Caco-2 (cell line): ENCODE measurements at regions of chr4 and their contacts with region 1.

Region 1: GRCh38 chr4:125314676-125315575 is at the start of gene FAT4:
- DNase-seq: peak; percentile 84 to 86
- H3K4me3 ChIP-seq: peak within 1 kb of the TSS; percentile 47
- H3K4me3 Mint-ChIP-seq: peak within 1 kb of the TSS; percentile 79
- H3K27ac Mint-ChIP-seq: no peak within 1 kb of the TSS
- H3K4me1 ChIP-seq: 0 out of 2 replicates have a peak, but pooled peaks cover 7% of the 10 kb centered on the region
- H3K4me1 Mint-ChIP-seq: no peaks in the 10 kb centered on the region
- H3K27me3 ChIP-seq: no peaks in the 10 kb centered on the region
- H3K27me3 Mint-ChIP-seq: no peaks in the 10 kb centered on the region
- CTCF ChIP-seq: no peak
- total RNA-seq, gene FAT4: 0.05 TPM in 1 of 2 replicates, not detected in the other

Region 2: DNA sequence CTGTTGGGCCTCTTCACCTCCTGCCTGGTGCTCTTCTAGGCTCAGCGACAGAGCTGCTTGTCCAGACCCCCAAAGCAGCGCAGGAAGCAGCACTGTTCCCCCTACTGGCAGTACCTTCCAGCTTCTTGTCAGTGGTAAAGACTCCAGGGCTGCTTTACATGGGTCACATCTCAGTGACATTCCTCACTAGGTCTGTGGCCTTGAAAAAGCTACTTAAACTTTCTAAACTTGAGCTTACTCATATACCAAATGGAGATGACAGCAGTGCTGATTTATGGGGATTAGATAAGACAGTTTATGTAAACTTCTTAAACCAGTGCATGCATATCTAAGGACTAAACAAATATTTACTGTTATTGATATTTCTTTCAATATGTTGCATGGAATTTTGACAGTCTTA is 117.2 kb after region 1 on chr4:
- CTCF ChIA-PET with region 1: no interaction called
- POLR2A ChIA-PET with region 1: no interaction called
- intact Hi-C with region 1: loop called (anchors 5 kb)
- DNase-seq: peak in 1 of 2 experiments; percentile 3
- H3K4me3 ChIP-seq: no peak overlapping the region
- H3K4me3 Mint-ChIP-seq: no peak overlapping the region
- H3K27ac Mint-ChIP-seq: no peak overlapping the region
- H3K4me1 ChIP-seq: no peaks in the 10 kb centered on the region
- H3K4me1 Mint-ChIP-seq: no peaks in the 10 kb centered on the region
- H3K27me3 ChIP-seq: no peaks in the 10 kb centered on the region
- H3K27me3 Mint-ChIP-seq: no peaks in the 10 kb centered on the region
- CTCF ChIP-seq: peak in 1 of 2 experiments; percentile 9

Region 3: GRCh38 chr4:125590158-125590557 is 275.2 kb after region 1 on chr4:
- CTCF ChIA-PET with region 1: no interaction called
- POLR2A ChIA-PET with region 1: no interaction called
- intact Hi-C with region 1: loop called (anchors 10 kb)
- DNase-seq: peak; percentile 11 to 49
- H3K4me3 ChIP-seq: no peak overlapping the region
- H3K4me3 Mint-ChIP-seq: no peak overlapping the region
- H3K27ac Mint-ChIP-seq: no peak overlapping the region
- H3K4me1 ChIP-seq: 0 out of 2 replicates have a peak, but pooled peaks cover 7% of the 10 kb centered on the region
- H3K4me1 Mint-ChIP-seq: no peaks in the 10 kb centered on the region
- H3K27me3 ChIP-seq: no peaks in the 10 kb centered on the region
- H3K27me3 Mint-ChIP-seq: no peaks in the 10 kb centered on the region
- CTCF ChIP-seq: no peak

Region 4: DNA sequence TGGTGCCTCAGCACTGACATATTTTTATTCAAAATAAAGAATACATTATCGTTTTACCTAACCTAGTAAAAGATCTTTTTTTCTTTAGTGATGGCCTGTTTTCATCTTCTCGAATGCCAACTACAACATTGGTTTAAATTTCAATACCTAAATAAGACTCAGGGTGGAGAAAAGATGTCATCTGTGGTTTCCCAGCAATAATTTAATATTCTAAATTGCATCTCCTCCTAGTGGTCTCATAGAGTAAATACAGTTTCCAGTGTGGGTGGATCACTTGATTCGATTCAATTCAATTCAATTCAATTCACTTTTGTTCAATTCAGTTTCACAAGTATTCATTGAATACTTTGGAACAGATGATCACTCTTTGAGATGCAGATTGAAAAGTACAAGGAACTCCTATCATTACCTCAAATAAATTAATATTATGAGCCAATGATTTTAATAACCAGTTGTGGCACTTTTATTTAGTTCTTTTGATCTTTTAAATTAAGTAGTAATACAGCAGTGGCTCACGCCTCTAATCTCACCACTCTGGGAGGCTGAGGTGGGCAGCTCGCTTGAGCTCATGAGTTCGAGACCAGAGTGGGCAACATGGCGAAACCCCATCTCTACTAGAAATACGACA is 427.0 kb after region 1 on chr4:
- CTCF ChIA-PET with region 1: no interaction called
- POLR2A ChIA-PET with region 1: no interaction called
- intact Hi-C with region 1: loop called (anchors 2 kb)
- DNase-seq: no peak
- H3K4me3 ChIP-seq: no peak overlapping the region
- H3K4me3 Mint-ChIP-seq: no peak overlapping the region
- H3K27ac Mint-ChIP-seq: no peak overlapping the region
- H3K4me1 ChIP-seq: no peaks in the 10 kb centered on the region
- H3K4me1 Mint-ChIP-seq: no peaks in the 10 kb centered on the region
- H3K27me3 ChIP-seq: no peaks in the 10 kb centered on the region
- H3K27me3 Mint-ChIP-seq: no peaks in the 10 kb centered on the region
- CTCF ChIP-seq: peak; percentile 10 to 41

Region 5: DNA sequence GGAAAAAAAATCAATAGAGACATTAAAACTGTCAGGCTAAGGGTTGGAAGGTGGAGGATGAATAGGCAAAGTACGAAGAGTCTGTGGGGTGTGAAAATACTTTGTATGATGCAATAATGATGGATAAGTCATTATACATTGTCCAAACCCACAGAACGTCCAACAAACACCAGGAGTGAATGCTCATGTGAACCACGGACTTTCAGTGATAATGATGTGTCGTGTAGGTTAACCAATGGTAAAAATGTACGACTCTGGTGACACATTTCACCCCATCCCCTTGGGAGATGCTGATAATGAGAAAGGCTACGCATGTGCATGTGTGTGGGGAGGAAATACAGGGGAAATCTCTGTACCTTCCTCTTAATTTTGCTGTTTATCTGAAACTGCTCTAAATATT is 665.0 kb after region 1 on chr4:
- CTCF ChIA-PET with region 1: no interaction called
- POLR2A ChIA-PET with region 1: no interaction called
- intact Hi-C with region 1: loop called (anchors 1 kb)
- DNase-seq: no peak
- H3K4me3 ChIP-seq: no peak overlapping the region
- H3K4me3 Mint-ChIP-seq: no peak overlapping the region
- H3K27ac Mint-ChIP-seq: no peak overlapping the region
- H3K4me1 ChIP-seq: no peaks in the 10 kb centered on the region
- H3K4me1 Mint-ChIP-seq: no peaks in the 10 kb centered on the region
- H3K27me3 ChIP-seq: no peaks in the 10 kb centered on the region
- H3K27me3 Mint-ChIP-seq: no peaks in the 10 kb centered on the region
- CTCF ChIP-seq: no peak

Region 6: GRCh38 chr4:126405369-126405982 is 1090.5 kb after region 1 on chr4:
- CTCF ChIA-PET with region 1: no interaction called
- POLR2A ChIA-PET with region 1: no interaction called
- intact Hi-C with region 1: loop called (anchors 1 kb)
- DNase-seq: peak in 1 of 2 experiments; percentile 7
- H3K4me3 ChIP-seq: no peak overlapping the region
- H3K4me3 Mint-ChIP-seq: no peak overlapping the region
- H3K27ac Mint-ChIP-seq: no peak overlapping the region
- H3K4me1 ChIP-seq: no peaks in the 10 kb centered on the region
- H3K4me1 Mint-ChIP-seq: no peaks in the 10 kb centered on the region
- H3K27me3 ChIP-seq: no peaks in the 10 kb centered on the region
- H3K27me3 Mint-ChIP-seq: no peaks in the 10 kb centered on the region
- CTCF ChIP-seq: peak; percentile 30 to 41

Region 7: DNA sequence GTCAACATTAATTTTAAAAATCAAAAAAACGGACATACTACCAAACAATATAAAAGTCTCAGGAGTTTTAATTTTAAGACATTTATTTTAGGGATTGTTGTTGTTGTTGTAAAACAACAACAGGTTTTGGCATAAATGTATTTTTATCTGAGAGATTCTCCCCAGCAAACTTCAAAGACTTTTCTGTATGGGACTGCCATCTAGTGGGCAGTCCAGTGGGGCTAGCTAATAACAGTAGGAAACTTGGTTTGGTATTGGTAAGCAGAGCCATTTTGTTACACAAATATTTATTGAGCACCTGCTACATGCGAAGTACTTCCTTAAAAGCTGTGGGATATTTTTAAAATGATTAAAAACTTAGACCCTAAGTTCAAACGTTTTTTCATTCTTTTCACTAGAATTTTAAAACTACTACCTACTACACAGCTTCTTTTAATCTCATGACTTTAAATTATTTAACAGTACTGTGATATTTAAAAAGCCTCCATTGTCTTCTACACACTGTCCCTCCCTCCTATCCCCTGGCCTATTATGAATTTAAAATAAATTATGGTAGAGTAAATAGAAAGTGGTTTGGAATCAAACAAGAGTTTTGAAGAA is 1289.4 kb after region 1 on chr4:
- CTCF ChIA-PET with region 1: no interaction called
- POLR2A ChIA-PET with region 1: no interaction called
- intact Hi-C with region 1: loop called (anchors 1 kb)
- DNase-seq: peak in 1 of 2 experiments; percentile 10
- H3K4me3 ChIP-seq: no peak overlapping the region
- H3K4me3 Mint-ChIP-seq: no peak overlapping the region
- H3K27ac Mint-ChIP-seq: no peak overlapping the region
- H3K4me1 ChIP-seq: no peaks in the 10 kb centered on the region
- H3K4me1 Mint-ChIP-seq: no peaks in the 10 kb centered on the region
- H3K27me3 ChIP-seq: no peaks in the 10 kb centered on the region
- H3K27me3 Mint-ChIP-seq: no peaks in the 10 kb centered on the region
- CTCF ChIP-seq: peak; percentile 26 to 64